Heart left ventricle (tissue), 16 donors: ENCODE measurements at regions of chr17 and their contacts with region 1.

Region 1: GRCh38 chr17:42428141-42428944 is 5.3 kb upstream of the CAVIN1 start:
- DNase-seq: peak in 1 of 5 donors; percentile 53
- ATAC-seq: peak in 3 of 4 donors; percentile 51 to 71 (median 60)
- H3K4me3 ChIP-seq: peak overlapping the region in 1 of 12 donors; percentile 5
- H3K27ac ChIP-seq: peak overlapping the region in 2 of 12 donors; percentile 20 to 31
- H3K4me1 ChIP-seq: peaks cover 0 to 44% (median 14%) of the 10 kb centered on the region in 12 donors
- H3K27me3 ChIP-seq: peaks cover 0 to 5% (median 0%) of the 10 kb centered on the region in 9 donors
- CTCF ChIP-seq: peak; percentile 40 to 72 (median 58)
- POLR2A ChIP-seq: no peak

Region 2: GRCh38 chr17:42312285-42313130 is 115.8 kb before region 1 on chr17:
- intact Hi-C with region 1: no loop called
- DNase-seq: peak; percentile 87 to 92 (median 91)
- ATAC-seq: peak; percentile 75 to 85 (median 82)
- H3K4me3 ChIP-seq: peak overlapping the region in 9 of 12 donors; percentile 1 to 44 (median 24)
- H3K27ac ChIP-seq: peak overlapping the region; percentile 55 to 92 (median 76)
- H3K4me1 ChIP-seq: peaks cover 4 to 47% (median 27%) of the 10 kb centered on the region in 12 donors
- H3K27me3 ChIP-seq: no peaks in the 10 kb centered on the region
- CTCF ChIP-seq: peak; percentile 38 to 77 (median 66)
- POLR2A ChIP-seq: no peak

Region 3: DNA sequence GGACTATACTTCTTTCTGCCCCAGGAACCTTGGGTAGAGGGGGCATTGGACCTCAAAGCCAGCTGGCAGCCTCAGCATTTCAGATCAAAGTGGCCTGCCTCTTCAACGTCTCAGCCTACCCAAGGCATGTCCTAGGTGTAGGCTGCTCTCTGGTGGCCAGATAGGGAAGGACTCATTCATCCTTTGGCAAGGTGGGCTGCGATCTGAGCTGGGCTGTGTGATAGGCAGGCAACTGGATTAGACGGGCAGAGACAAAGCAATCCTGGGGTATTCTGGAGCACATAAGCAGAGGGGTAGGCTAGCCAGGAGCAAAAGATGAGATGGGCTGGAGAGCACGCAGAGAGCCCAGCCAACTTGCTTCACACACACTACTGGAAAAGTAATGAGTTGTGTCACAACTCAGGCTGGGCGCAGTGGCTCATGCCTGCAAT is 98.9 kb after region 1 on chr17:
- intact Hi-C with region 1: loop called in 6 of 10 experiments (anchors 5 to 10 kb)
- DNase-seq: peak in 4 of 5 donors; percentile 73 to 75 (median 74)
- ATAC-seq: peak; percentile 51 to 84 (median 82)
- H3K4me3 ChIP-seq: no peak overlapping the region
- H3K27ac ChIP-seq: peak overlapping the region in 8 of 12 donors; percentile 54 to 97 (median 74)
- H3K4me1 ChIP-seq: peaks cover 0 to 51% (median 32%) of the 10 kb centered on the region in 12 donors
- H3K27me3 ChIP-seq: no peaks in the 10 kb centered on the region
- CTCF ChIP-seq: peak; percentile 72 to 87 (median 81)
- POLR2A ChIP-seq: no peak

Region 4: GRCh38 chr17:42698736-42699414 is 270.5 kb after region 1 on chr17:
- intact Hi-C with region 1: no loop called
- DNase-seq: peak in 4 of 5 donors; percentile 54 to 72 (median 62)
- ATAC-seq: peak; percentile 67 to 82 (median 80)
- H3K4me3 ChIP-seq: no peak overlapping the region
- H3K27ac ChIP-seq: peak overlapping the region in 1 of 12 donors; percentile 16
- H3K4me1 ChIP-seq: peaks cover 0 to 11% (median 4%) of the 10 kb centered on the region in 12 donors
- H3K27me3 ChIP-seq: no peaks in the 10 kb centered on the region
- CTCF ChIP-seq: no peak
- POLR2A ChIP-seq: no peak